GM12878 (cell line): ENCODE measurements at regions of chr3 and their contacts with region 1.

Region 1: GRCh38 chr3:171269542-171269941 is 190.7 kb downstream of the TNIK start:
- DNase-seq: no peak
- ATAC-seq: peak; percentile 54
- H3K4me3 ChIP-seq: no peak overlapping the region
- H3K27ac ChIP-seq: peak overlapping the region; percentile 80
- H3K4me1 ChIP-seq: peaks cover 72% of the 10 kb centered on the region
- H3K27me3 ChIP-seq: no peaks in the 10 kb centered on the region
- CTCF ChIP-seq: no peak
- EP300 ChIP-seq: no peak
- POLR2A ChIP-seq: no peak
- RAD21 ChIP-seq: no peak

Region 2: GRCh38 chr3:171162986-171163723 is 106.4 kb before region 1 on chr3:
- CTCF ChIA-PET with region 1: no interaction called
- POLR2A ChIA-PET with region 1: no interaction called
- RAD21 ChIA-PET with region 1: no interaction called
- SMC1A ChIA-PET with region 1: no interaction called
- in situ Hi-C with region 1: no loop called
- intact Hi-C with region 1: no loop called
- DNase-seq: no peak
- ATAC-seq: peak; percentile 50
- H3K4me3 ChIP-seq: no peak overlapping the region
- H3K27ac ChIP-seq: no peak overlapping the region; the same call in 1 of the 2 replicates
- H3K4me1 ChIP-seq: peaks cover 14% of the 10 kb centered on the region
- H3K27me3 ChIP-seq: no peaks in the 10 kb centered on the region
- CTCF ChIP-seq: peak; percentile 58 to 87 (median 63); a peak in 5 of 6 replicates
- EP300 ChIP-seq: no peak
- POLR2A ChIP-seq: no peak
- RAD21 ChIP-seq: peak; percentile 77

Region 3: DNA sequence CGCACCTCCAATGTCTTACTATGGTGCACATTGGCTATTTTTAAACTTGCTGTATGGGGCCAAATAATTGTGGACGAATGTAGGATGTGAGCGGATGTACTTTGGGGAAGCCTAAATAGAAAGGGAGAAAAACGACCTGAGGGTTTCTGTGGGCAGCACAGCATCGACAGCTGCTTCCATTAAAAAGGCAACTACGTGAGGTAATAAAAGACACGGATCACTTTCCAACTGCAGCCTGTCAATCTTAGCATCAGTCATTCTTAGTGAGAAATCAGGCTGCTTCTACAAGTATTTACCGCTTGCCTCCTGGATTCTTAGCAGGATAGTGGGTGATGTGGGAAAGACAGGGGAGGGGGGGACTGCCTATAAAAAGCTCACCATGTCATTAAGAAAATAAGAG is 56.4 kb before region 1 on chr3:
- CTCF ChIA-PET with region 1: no interaction called
- POLR2A ChIA-PET with region 1: no interaction called
- RAD21 ChIA-PET with region 1: no interaction called
- SMC1A ChIA-PET with region 1: no interaction called
- in situ Hi-C with region 1: no loop called
- intact Hi-C with region 1: no loop called
- DNase-seq: no peak
- ATAC-seq: no peak
- H3K4me3 ChIP-seq: no peak overlapping the region
- H3K27ac ChIP-seq: no peak overlapping the region
- H3K4me1 ChIP-seq: no peaks in the 10 kb centered on the region
- H3K27me3 ChIP-seq: no peaks in the 10 kb centered on the region
- CTCF ChIP-seq: no peak
- EP300 ChIP-seq: no peak
- POLR2A ChIP-seq: no peak
- RAD21 ChIP-seq: no peak

Region 4: GRCh38 chr3:171284308-171285075 is 14.9 kb after region 1 on chr3:
- CTCF ChIA-PET with region 1: interaction called, 5 read pairs
- POLR2A ChIA-PET with region 1: interaction called, 27 read pairs
- RAD21 ChIA-PET with region 1: interaction called, 60 read pairs
- SMC1A ChIA-PET with region 1: interaction called, 172 read pairs
- in situ Hi-C with region 1: no loop called
- intact Hi-C with region 1: no loop called
- DNase-seq: peak; percentile 76
- ATAC-seq: peak; percentile 64
- H3K4me3 ChIP-seq: peak overlapping the region; percentile 36; the same call in 1 of the 2 replicates
- H3K27ac ChIP-seq: peak overlapping the region; percentile 96
- H3K4me1 ChIP-seq: peaks cover 61% of the 10 kb centered on the region
- H3K27me3 ChIP-seq: no peaks in the 10 kb centered on the region
- CTCF ChIP-seq: no peak
- EP300 ChIP-seq: peak in 1 of 2 experiments; percentile 21; a peak in 1 of 4 replicates
- POLR2A ChIP-seq: no peak
- RAD21 ChIP-seq: no peak

Region 5: DNA sequence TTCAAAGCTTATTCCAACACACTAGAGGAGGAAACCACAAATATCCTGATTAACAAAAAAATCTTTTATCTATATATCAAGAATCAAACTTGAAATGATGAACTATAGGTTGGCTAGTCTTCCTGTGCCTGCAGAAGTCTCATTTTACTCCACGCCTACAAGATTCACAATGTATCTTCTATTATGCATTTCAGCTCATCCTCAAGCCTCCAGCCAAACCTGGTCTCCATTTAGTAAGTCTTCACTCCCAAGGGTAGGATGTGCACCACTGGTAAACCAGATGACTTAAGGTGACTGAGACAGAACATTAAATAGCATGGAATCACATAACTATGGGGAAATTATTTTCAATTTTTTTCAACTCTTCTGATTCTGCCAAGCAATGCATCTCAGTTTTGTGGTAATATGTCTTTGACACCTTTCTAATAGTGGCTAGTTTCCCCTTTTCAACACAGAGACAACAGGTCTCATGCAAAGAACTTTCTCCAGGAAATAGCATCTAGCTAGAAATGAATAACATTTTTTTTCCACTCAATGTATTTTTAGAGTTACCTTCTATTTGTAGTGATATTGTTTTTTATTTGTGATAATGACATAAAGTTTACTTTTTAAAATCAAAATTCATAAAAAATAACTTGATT is 23.7 kb after region 1 on chr3:
- CTCF ChIA-PET with region 1: interaction called, 5 read pairs
- POLR2A ChIA-PET with region 1: no interaction called
- RAD21 ChIA-PET with region 1: interaction called, 7 read pairs
- SMC1A ChIA-PET with region 1: interaction called, 16 read pairs
- in situ Hi-C with region 1: no loop called
- intact Hi-C with region 1: no loop called
- DNase-seq: no peak
- ATAC-seq: peak; percentile 67
- H3K4me3 ChIP-seq: no peak overlapping the region
- H3K27ac ChIP-seq: peak overlapping the region; percentile 60
- H3K4me1 ChIP-seq: peaks cover 60% of the 10 kb centered on the region
- H3K27me3 ChIP-seq: no peaks in the 10 kb centered on the region
- CTCF ChIP-seq: no peak
- EP300 ChIP-seq: 0 out of 4 replicates have a peak, but pooled peaks have one; percentile 7 to 22
- POLR2A ChIP-seq: no peak
- RAD21 ChIP-seq: no peak

Region 6: DNA sequence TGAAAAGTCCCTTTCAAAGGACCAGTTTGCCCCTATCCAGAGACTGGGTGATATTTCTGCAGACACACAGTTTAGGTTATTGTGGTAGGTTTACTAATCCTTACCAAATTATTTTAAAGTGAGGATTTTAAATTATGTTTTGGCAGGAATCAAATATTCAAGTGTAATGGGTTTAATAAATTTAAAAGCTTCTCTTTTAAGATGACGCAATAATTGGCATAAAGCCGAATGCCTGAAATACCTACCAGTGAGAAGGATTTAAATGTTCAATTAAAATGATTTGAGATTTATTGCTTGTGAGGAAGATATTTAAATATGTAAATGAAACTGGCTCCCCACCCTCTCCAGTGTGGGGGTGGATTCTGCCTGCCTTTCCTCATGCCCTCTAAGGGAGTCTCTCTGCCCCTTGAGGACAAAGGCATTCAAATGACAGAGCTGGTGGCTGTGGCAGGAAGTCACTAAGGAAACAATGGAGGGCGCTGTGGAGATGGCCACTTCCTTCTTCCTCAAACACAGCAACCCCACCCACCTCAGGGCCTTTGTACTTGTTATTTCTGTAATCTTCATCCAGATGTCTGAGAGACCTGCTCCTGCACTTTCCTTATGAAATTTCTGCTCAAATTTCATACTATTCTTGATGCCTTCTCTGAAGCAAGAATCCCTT is 59.0 kb after region 1 on chr3:
- CTCF ChIA-PET with region 1: no interaction called
- POLR2A ChIA-PET with region 1: no interaction called
- RAD21 ChIA-PET with region 1: interaction called, 3 read pairs
- SMC1A ChIA-PET with region 1: interaction called, 12 read pairs
- in situ Hi-C with region 1: no loop called
- intact Hi-C with region 1: no loop called
- DNase-seq: no peak
- ATAC-seq: peak; percentile 60
- H3K4me3 ChIP-seq: no peak overlapping the region
- H3K27ac ChIP-seq: peak overlapping the region; percentile 6
- H3K4me1 ChIP-seq: peaks cover 38% of the 10 kb centered on the region
- H3K27me3 ChIP-seq: no peaks in the 10 kb centered on the region
- CTCF ChIP-seq: peak; percentile 27 to 36 (median 28); a peak in 4 of 6 replicates
- EP300 ChIP-seq: no peak
- POLR2A ChIP-seq: no peak
- RAD21 ChIP-seq: no peak

Region 7: DNA sequence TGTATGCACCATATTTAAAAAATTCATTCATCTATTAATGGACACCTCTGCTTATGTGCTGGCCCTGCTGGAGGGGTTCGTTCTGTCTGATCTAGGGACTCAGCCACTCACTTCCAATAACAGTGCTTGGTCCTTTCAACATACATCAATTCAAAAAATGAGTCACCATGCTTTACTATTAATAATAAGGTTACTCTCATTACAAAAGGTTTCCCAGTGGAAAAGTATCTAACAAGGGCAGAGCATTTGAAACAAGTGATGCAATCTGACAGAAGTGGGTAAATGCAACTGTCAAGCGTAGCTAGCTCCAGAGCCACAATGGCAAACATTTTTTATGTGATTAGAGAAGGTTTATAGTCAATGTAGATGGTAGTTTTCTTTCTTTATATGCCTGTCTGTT is 258.6 kb after region 1 on chr3:
- CTCF ChIA-PET with region 1: no interaction called
- POLR2A ChIA-PET with region 1: no interaction called
- RAD21 ChIA-PET with region 1: no interaction called
- SMC1A ChIA-PET with region 1: no interaction called
- in situ Hi-C with region 1: no loop called
- intact Hi-C with region 1: no loop called
- DNase-seq: no peak
- ATAC-seq: no peak
- H3K4me3 ChIP-seq: no peak overlapping the region
- H3K27ac ChIP-seq: no peak overlapping the region
- H3K4me1 ChIP-seq: no peaks in the 10 kb centered on the region
- H3K27me3 ChIP-seq: no peaks in the 10 kb centered on the region
- CTCF ChIP-seq: no peak
- EP300 ChIP-seq: no peak
- POLR2A ChIP-seq: no peak
- RAD21 ChIP-seq: no peak